ENCODE measurements at regions of chr14 and their contacts with region 1.

Region 1: GRCh38 chr14:74893614-74894091 is 11.9 kb downstream of the DLST start:
- DNase-seq: peak; percentile 37
- ATAC-seq: peak; percentile 69
- H3K4me3 ChIP-seq: no peak overlapping the region; the same call in 1 of the 2 replicates
- H3K27ac ChIP-seq: peak overlapping the region; percentile 63
- H3K4me1 ChIP-seq: peaks cover 35% of the 10 kb centered on the region
- H3K27me3 ChIP-seq: no peaks in the 10 kb centered on the region
- CTCF ChIP-seq: no peak
- EP300 ChIP-seq: no peak
- POLR2A ChIP-seq: no peak
- RAD21 ChIP-seq: no peak

Region 2: DNA sequence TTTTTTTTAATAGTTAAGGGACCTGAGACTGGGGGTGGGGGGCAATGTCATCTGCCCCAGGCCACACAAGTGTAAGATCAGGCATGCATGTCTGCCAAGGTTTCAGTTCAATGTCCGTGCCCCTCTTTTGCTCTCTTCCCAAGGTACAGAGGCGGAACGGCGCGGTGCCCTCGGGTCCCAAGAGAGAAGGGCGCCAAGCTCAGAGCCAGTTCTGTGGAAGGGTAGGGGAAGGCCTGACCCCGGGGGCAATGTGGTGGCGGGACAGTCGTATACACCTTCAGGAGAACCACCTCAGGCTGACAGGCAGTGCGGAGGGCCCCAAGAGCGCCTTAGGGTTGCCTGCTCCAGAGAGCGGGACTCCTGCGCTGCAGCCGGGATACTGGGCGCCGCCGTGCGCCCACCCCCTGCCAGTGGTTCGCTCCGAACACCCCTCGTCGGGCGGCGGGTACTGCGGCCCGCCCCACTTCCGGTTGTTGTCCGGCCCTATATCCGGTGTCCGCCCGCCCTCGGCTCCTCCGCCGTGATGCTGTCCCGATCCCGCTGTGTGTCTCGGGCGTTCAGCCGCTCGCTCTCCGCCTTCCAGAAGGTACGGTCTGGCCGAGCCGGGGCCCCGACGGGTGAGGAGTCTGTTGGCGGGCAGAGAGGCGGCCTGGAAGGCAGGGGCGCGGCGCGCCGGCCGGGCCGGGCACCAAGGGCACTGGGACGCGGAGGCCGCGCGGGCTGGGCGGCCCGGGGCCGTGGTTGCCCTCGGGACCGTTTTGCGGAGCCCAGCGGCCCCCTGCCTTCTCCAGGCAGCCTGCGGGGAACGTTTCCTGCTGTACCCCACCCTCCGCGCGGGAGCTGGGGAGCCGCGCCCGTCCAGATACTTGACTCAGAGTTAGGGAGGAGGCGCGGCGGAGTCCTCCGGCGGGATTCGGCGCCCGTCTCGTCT is 12.0 kb before region 1 on chr14 and contains the start of gene DLST:
- CTCF ChIA-PET with region 1: interaction called, 13 read pairs
- POLR2A ChIA-PET with region 1: interaction called, 11 read pairs
- RAD21 ChIA-PET with region 1: interaction called, 20 read pairs
- SMC1A ChIA-PET with region 1: interaction called, 17 read pairs
- in situ Hi-C with region 1: no loop called
- intact Hi-C with region 1: no loop called
- DNase-seq: peak; percentile 39
- ATAC-seq: peak; percentile 94
- H3K4me3 ChIP-seq: peak within 1 kb of the TSS; percentile 90
- H3K27ac ChIP-seq: peak within 1 kb of the TSS; percentile 81
- H3K4me1 ChIP-seq: peaks cover 8% of the 10 kb centered on the region
- H3K27me3 ChIP-seq: no peaks in the 10 kb centered on the region
- CTCF ChIP-seq: no peak
- EP300 ChIP-seq: no peak
- POLR2A ChIP-seq: peak; percentile 95
- RAD21 ChIP-seq: no peak
- polyA plus RNA-seq, gene DLST: 2.9 to 12.2 TPM

Region 3: DNA sequence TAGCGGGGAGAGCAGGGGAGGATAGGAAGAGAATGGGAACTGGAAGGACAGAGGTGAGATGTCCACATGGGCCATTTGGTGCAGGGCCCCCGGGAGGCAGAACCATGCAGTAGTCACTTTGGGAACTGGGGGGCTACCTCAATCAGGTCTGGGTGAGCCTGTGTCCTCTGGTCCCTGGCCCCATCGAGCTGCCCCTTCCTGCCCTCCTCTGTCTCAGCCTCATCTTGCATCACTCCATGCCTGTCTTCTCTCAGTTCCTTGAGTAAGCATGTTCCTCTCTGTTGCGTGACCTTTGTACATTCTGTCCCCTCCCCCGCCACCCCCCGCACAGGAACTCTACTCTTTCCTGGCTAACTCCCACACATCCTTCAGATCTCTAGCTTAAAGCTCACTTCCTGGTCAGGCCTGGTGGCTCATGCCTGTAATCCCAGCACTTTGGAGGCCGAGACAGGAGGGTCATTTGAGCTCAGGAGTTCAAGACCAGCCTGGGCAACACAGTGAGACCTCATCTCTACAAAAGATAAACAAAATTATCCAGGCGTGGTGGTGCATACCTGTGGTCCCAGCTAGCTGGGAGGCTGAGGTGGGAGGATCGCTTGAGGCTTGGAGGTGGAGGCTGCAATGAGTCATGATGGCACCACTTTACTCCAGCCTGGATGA is 408.1 kb after region 1 on chr14:
- CTCF ChIA-PET with region 1: no interaction called
- POLR2A ChIA-PET with region 1: interaction called, 10 read pairs
- RAD21 ChIA-PET with region 1: no interaction called
- SMC1A ChIA-PET with region 1: no interaction called
- in situ Hi-C with region 1: no loop called
- intact Hi-C with region 1: no loop called
- DNase-seq: no peak
- ATAC-seq: peak; percentile 29; the same call in 1 of the 3 replicates
- H3K4me3 ChIP-seq: no peak overlapping the region
- H3K27ac ChIP-seq: no peak overlapping the region
- H3K4me1 ChIP-seq: no peaks in the 10 kb centered on the region
- H3K27me3 ChIP-seq: no peaks in the 10 kb centered on the region
- CTCF ChIP-seq: no peak
- EP300 ChIP-seq: no peak
- POLR2A ChIP-seq: no peak
- RAD21 ChIP-seq: no peak

Measured in GM12878 (cell line).